Posterior vena cava (tissue), 2 donors: ENCODE measurements at regions of chr6 and their contacts with region 1.

Region 1: GRCh38 chr6:111997078-111997852 is 56.6 kb upstream of the CCN6 start:
- DNase-seq: peak; percentile 93

Region 2: GRCh38 chr6:110618591-110619267 is 1378.5 kb before region 1 on chr6:
- intact Hi-C with region 1: no loop called
- DNase-seq: no peak

Region 3: GRCh38 chr6:111852725-111853124 is 144.5 kb before region 1 on chr6:
- intact Hi-C with region 1: no loop called
- DNase-seq: no peak

Region 4: DNA sequence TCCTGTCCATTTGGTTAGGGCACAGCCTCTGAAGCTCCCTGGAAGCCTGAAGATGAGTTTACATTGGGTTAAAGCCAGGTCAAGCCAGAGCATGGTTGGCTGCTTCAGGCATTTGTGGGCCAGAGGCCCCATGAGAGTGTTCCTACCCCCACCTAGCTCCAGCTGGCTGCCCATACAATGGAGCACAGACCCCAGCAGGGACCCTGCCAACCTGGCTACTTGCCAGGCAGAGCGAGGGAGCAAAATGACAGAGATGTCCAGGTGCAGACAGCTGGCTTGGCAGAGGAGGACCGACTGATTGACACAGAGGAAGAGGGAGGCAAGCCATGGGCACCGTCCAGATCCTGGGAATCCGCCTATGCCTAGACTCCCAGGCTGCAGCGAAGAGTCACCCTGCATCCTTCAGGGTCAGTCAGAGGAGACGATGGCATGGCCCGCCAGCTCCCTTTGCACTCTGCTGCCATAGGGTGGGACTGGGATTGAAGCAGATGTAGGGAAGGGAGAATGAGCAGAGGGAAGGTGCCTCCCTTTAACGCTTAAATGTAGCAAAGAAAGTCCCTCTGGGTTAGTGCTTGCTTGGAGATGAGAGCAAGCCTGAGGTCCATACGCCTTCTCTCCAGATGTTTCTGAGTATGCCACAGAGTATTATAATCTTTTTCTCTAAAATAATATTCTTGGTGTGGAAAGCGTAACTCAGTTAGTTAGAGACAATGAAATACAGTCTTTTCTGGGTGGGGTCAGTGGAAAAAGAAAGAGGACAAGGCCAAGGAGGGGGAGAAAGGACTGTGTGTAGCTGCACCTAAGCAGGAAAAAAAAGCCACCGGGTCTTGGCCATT is 46.4 kb before region 1 on chr6:
- intact Hi-C with region 1: no loop called
- DNase-seq: no peak

Region 5: GRCh38 chr6:112043032-112044007 is 46.1 kb after region 1 on chr6:
- intact Hi-C with region 1: loop called in 1 of 2 experiments (anchors 5 kb)
- DNase-seq: peak; percentile 96